ENCODE measurements at regions of chr5 and their contacts with region 1.

Region 1: DNA sequence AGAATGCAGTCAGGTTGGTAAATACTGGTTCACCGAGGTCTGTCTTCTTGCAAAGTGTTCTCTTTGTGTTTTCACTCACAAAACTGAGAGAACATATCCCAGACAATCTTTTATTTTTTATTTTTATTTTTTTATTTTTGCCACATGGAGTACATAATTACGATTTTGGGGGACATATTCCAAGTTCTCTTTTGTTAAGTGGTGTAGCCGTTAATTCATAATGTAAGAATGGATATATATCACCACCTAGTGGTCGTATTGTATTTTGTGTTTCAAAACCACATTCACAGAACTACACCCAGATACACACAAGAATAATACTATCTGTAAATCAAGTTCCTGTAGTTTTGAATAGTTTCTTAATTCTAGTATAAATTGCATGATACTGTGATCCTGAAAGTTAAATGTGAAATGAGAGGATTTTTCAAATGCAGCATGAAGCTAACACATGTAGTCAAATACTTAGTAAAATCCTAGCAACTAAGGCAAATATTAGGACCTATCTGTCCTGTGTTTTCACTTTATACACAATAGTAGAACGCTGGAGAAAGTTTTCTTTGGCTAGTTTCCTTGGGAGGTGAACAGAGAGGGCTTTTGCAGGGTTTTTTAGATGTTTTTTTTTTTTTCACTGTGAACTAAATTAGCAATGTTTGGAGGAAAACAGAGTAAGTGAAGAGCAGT is 92.7 kb downstream of the VCAN start:
- DNase-seq: no peak
- H3K4me3 ChIP-seq: no peak overlapping the region
- H3K4me1 ChIP-seq: no peaks in the 10 kb centered on the region
- H3K27me3 ChIP-seq: 0 out of 2 replicates have a peak, but pooled peaks cover 2% of the 10 kb centered on the region

Region 2: GRCh38 chr5:82312373-82312856 is 1251.8 kb before region 1 on chr5:
- in situ Hi-C with region 1: loop called (anchors 25 kb)
- DNase-seq: peak; percentile 66 to 80
- H3K4me3 ChIP-seq: no peak overlapping the region
- H3K4me1 ChIP-seq: no peaks in the 10 kb centered on the region; the same call in 1 of the 2 replicates
- H3K27me3 ChIP-seq: no peaks in the 10 kb centered on the region

Region 3: GRCh38 chr5:82641331-82642003 is 922.7 kb before region 1 on chr5:
- in situ Hi-C with region 1: loop called (anchors 25 kb)
- DNase-seq: peak; percentile 41 to 76
- H3K4me3 ChIP-seq: no peak overlapping the region
- H3K4me1 ChIP-seq: no peaks in the 10 kb centered on the region
- H3K27me3 ChIP-seq: peaks cover 5% of the 10 kb centered on the region; the same call in 1 of the 2 replicates